ENCODE measurements at regions of chr2 and their contacts with region 1.

Region 1: GRCh38 chr2:85594715-85595300 is 737 bp upstream of the RNF181 start:
- DNase-seq: no peak
- H3K4me3 ChIP-seq: peak overlapping the region; percentile 25 to 85 (median 78)
- H3K27ac ChIP-seq: peak overlapping the region; percentile 89 to 96 (median 95)
- H3K4me1 ChIP-seq: peaks cover 16 to 36% (median 24%) of the 10 kb centered on the region in 4 donors
- H3K27me3 ChIP-seq: no peaks in the 10 kb centered on the region
- CTCF ChIP-seq: no peak
- EP300 ChIP-seq: no peak
- POLR2A ChIP-seq: no peak

Region 2: DNA sequence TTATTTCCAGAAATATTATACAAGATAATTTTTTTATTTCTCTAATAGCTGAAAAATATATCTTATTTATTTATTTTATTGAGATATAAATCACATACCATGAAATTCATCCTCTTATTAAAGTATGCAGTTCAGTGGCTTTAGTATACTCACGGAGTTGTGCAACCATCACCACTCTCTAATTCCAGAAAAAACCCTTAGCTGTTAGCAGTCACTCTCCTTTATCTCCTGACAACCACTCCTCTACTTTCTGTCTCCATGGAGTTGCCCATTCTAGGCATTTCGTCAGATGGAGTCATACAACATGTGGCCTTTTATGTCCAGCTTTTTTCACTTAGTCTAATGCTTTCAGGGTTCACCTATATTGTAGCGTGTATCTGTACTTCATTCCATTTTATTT is 395.1 kb before region 1 on chr2:
- in situ Hi-C with region 1: no loop called
- intact Hi-C with region 1: no loop called
- DNase-seq: no peak
- H3K4me3 ChIP-seq: no peak overlapping the region
- H3K27ac ChIP-seq: no peak overlapping the region
- H3K4me1 ChIP-seq: peaks cover 0 to 5% (median 2%) of the 10 kb centered on the region in 4 donors
- H3K27me3 ChIP-seq: no peaks in the 10 kb centered on the region
- CTCF ChIP-seq: no peak
- EP300 ChIP-seq: no peak
- POLR2A ChIP-seq: no peak

Region 3: GRCh38 chr2:85611705-85612587 is 17.1 kb after region 1 on chr2 and contains the start of gene C2orf68:
- in situ Hi-C with region 1: no loop called
- intact Hi-C with region 1: loop called (anchors 1 kb)
- DNase-seq: peak; percentile 92
- H3K4me3 ChIP-seq: peak within 1 kb of the TSS; percentile 60 to 93 (median 92)
- H3K27ac ChIP-seq: peak within 1 kb of the TSS; percentile 88 to 91 (median 89)
- H3K4me1 ChIP-seq: peaks cover 4 to 25% (median 15%) of the 10 kb centered on the region in 4 donors
- H3K27me3 ChIP-seq: no peaks in the 10 kb centered on the region
- CTCF ChIP-seq: no peak
- EP300 ChIP-seq: no peak
- POLR2A ChIP-seq: peak; percentile 80
- total RNA-seq, gene C2orf68: 17.7 to 24.8 (median 18.6) TPM

Region 4: DNA sequence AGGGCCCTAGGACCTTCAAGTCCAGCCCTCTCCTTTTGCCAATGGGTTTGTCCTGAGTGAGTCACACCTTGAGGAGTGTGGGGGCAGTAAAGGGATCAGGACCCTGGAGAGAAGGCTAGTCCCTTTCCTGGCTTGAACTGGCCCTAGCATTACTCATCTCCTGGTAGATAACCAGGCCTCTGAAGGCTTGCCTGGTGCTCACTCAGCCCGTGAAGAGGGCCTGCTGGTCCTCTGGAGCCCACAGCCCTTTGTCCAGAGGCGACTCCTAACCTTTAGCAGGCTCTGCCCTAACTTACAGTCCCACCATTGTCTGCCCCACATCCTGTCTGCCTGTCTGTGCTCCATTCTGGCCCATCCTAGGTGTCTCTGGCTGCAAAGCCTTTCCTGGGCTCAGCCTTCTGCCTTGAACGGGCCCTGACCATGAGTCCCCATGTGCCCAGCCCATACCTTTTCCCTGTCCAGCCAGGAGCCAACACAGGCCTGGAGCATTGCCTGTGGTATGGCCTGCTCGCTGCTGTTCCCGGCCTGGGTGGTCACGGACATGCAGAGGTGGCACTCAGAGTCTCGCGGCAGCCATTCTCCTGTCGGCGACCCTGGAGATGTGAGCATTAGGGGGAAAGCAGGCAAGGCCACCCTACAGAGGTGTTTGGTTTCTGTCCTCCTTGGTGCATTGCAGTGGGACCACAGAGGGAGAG is 68.2 kb after region 1 on chr2:
- in situ Hi-C with region 1: no loop called
- intact Hi-C with region 1: no loop called
- DNase-seq: no peak
- H3K4me3 ChIP-seq: no peak overlapping the region
- H3K27ac ChIP-seq: no peak overlapping the region
- H3K4me1 ChIP-seq: no peaks in the 10 kb centered on the region
- H3K27me3 ChIP-seq: no peaks in the 10 kb centered on the region
- CTCF ChIP-seq: no peak
- EP300 ChIP-seq: no peak
- POLR2A ChIP-seq: no peak